OCI-LY7 (cell line): ENCODE measurements at regions of chr17 and their contacts with region 1.

Region 1: GRCh38 chr17:3683054-3683511 is 12.9 kb downstream of the P2RX5 start:
- DNase-seq: peak; percentile 78
- H3K4me3 ChIP-seq: no peak overlapping the region
- H3K27ac ChIP-seq: peak overlapping the region; percentile 91
- H3K4me1 ChIP-seq: peaks cover 31% of the 10 kb centered on the region
- CTCF ChIP-seq: peak; percentile 95

Region 2: DNA sequence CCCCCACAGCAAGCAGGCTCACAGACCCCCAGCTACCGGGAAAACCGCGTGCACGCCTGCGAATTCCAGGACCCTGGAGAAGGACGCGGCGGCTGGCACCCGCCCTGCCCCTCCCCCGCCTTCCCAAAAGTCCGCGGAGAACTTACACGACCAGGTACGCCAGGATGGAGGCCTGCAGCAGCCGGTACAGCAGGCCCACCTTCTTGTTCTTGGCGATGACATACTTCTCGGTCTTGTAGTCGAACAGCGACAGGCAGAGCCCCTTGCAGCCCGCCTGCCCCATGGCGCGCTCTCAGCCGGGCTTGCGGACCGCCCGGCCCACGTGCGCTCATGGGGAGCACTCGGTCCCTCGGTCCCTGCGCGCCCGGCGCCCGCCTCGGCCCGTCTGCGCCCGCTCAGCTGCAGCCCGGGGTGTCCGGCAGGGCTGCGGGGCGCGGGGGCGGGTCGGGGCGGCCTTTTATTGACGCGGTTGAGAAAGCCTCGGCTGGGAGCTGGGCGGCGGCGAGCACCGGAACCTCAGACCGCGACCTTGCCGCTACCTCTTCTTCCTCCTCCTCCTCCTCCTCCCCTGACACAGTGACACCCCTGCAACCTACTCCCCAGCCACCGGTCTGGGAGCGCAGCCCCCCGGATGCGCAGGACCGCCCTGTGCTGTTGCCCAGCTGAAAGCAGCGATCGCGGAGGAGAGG is 12.8 kb after region 1 on chr17 and contains the start of gene P2RX5:
- CTCF ChIA-PET with region 1: no interaction called
- POLR2A ChIA-PET with region 1: no interaction called
- intact Hi-C with region 1: loop called (anchors 1 kb)
- DNase-seq: peak; percentile 87
- H3K4me3 ChIP-seq: peak within 1 kb of the TSS; percentile 79
- H3K27ac ChIP-seq: peak within 1 kb of the TSS; percentile 87
- H3K4me1 ChIP-seq: peaks cover 38% of the 10 kb centered on the region
- CTCF ChIP-seq: no peak
- total RNA-seq, gene P2RX5: 143 and 150 TPM in 2 replicates

Region 3: DNA sequence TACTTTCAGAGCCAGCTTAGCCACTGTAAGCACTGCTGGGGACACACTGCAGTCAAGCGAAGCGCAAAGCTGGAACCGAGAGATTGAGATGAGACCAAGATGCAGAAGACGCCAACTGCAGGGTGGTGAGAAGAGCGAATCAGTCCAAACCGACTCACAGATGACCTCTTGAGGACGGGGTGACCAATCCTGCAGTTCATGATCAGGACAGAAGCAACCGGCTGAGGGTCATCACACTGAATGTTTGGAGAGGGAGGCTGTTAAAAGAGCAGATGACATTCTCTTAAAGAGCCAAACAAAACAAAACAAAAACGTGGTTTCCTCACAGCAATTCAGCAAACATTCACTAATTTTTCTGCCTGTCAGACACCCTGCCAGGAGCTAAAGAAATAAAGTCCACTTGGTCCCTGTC is 49.1 kb after region 1 on chr17:
- CTCF ChIA-PET with region 1: no interaction called
- POLR2A ChIA-PET with region 1: interaction called, 3 read pairs
- intact Hi-C with region 1: loop called (anchors 1 kb)
- DNase-seq: peak; percentile 68
- H3K4me3 ChIP-seq: no peak overlapping the region
- H3K27ac ChIP-seq: no peak overlapping the region
- H3K4me1 ChIP-seq: peaks cover 26% of the 10 kb centered on the region
- CTCF ChIP-seq: peak; percentile 61

Region 4: GRCh38 chr17:3815925-3816324 is 132.8 kb after region 1 on chr17:
- CTCF ChIA-PET with region 1: no interaction called
- POLR2A ChIA-PET with region 1: no interaction called
- intact Hi-C with region 1: no loop called
- DNase-seq: no peak
- H3K4me3 ChIP-seq: no peak overlapping the region
- H3K27ac ChIP-seq: no peak overlapping the region
- H3K4me1 ChIP-seq: peaks cover 22% of the 10 kb centered on the region
- CTCF ChIP-seq: no peak

Region 5: GRCh38 chr17:3827124-3827773 is 144.2 kb after region 1 on chr17:
- CTCF ChIA-PET with region 1: no interaction called
- POLR2A ChIA-PET with region 1: no interaction called
- intact Hi-C with region 1: loop called (anchors 1 kb)
- DNase-seq: peak; percentile 73
- H3K4me3 ChIP-seq: no peak overlapping the region
- H3K27ac ChIP-seq: no peak overlapping the region
- H3K4me1 ChIP-seq: no peaks in the 10 kb centered on the region
- CTCF ChIP-seq: peak; percentile 98